Naive thymus-derived CD4-positive, alpha-beta T cell (primary cell): ENCODE measurements at regions of chr11 and their contacts with region 1.

Region 1: DNA sequence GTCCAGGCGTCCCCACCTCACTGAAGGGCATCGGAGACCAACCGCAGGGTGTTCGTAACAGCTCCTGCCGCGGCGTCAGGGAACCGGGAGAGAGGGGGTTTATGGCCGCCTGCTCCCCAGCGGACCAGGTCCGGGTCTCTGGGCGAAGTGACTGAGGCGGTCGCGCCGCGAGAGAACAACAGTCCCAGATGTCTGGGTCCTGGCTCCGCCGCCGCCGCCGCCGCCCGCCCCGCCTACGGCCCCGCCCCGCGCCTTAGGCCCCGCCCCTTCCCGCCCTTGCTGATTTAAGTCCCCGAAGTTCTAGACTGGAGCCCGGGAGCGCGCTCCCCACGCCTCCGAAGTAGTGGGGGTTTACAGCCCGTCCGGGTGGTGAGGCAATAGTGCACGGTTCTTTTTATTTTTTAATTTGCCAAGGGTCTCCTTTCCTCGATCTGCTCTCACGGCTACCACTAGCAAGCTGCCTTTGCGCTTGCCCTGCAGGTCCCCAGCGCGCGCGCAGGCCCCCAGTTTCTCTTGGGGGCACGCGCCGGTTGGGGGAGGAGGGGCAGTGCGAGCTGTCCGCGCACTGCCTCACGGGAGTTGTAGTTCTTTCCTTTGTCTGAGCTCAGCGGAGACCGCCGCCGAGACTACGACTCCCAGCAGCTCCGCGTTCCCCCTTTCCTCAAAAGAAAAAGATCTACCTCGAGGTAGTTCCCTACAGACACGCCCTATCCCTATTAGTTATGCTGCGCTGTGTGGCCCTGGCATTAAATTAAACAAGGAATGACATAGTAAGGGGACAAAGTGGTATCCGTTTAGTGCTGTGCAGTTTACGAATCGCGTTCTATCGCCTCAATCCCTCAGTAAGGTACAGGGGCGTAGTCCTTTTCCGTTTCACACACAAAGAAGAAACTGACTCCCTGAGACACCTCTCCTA is at the start of gene PGM2L1:
- DNase-seq: peak; percentile 86 to 97 (median 95)
- ATAC-seq: peak; percentile 94
- H3K4me3 ChIP-seq: peak within 1 kb of the TSS; percentile 64
- H3K4me3 Mint-ChIP-seq: peak within 1 kb of the TSS; percentile 95 to 100 (median 99)
- H3K27ac ChIP-seq: peak within 1 kb of the TSS; percentile 75
- H3K27ac Mint-ChIP-seq: peak within 1 kb of the TSS; percentile 93 to 99 (median 98)
- H3K4me1 ChIP-seq: peaks cover 0 to 10% of the 10 kb centered on the region in 2 donors
- H3K4me1 Mint-ChIP-seq: peaks cover 18 to 39% (median 28%) of the 10 kb centered on the region in 7 donors
- H3K27me3 ChIP-seq: no peaks in the 10 kb centered on the region
- H3K27me3 Mint-ChIP-seq: no peaks in the 10 kb centered on the region
- total RNA-seq, gene PGM2L1: 6.5 to 17.7 (median 9.9) TPM

Region 2: GRCh38 chr11:73779084-73779902 is 619.2 kb before region 1 on chr11:
- CTCF ChIA-PET with region 1: no interaction called
- POLR2A ChIA-PET with region 1: no interaction called
- intact Hi-C with region 1: loop called (anchors 1 kb)
- DNase-seq: peak; percentile 88 to 98 (median 97)
- ATAC-seq: peak; percentile 99
- H3K4me3 ChIP-seq: peak overlapping the region; percentile 58
- H3K4me3 Mint-ChIP-seq: peak overlapping the region; percentile 86 to 97 (median 94)
- H3K27ac ChIP-seq: peak overlapping the region; percentile 89
- H3K27ac Mint-ChIP-seq: peak overlapping the region; percentile 94 to 100 (median 100)
- H3K4me1 ChIP-seq: peaks cover 0 to 6% of the 10 kb centered on the region in 2 donors
- H3K4me1 Mint-ChIP-seq: peaks cover 2 to 18% (median 9%) of the 10 kb centered on the region in 7 donors
- H3K27me3 ChIP-seq: no peaks in the 10 kb centered on the region
- H3K27me3 Mint-ChIP-seq: peaks cover 0 to 6% (median 0%) of the 10 kb centered on the region in 5 donors

Region 3: DNA sequence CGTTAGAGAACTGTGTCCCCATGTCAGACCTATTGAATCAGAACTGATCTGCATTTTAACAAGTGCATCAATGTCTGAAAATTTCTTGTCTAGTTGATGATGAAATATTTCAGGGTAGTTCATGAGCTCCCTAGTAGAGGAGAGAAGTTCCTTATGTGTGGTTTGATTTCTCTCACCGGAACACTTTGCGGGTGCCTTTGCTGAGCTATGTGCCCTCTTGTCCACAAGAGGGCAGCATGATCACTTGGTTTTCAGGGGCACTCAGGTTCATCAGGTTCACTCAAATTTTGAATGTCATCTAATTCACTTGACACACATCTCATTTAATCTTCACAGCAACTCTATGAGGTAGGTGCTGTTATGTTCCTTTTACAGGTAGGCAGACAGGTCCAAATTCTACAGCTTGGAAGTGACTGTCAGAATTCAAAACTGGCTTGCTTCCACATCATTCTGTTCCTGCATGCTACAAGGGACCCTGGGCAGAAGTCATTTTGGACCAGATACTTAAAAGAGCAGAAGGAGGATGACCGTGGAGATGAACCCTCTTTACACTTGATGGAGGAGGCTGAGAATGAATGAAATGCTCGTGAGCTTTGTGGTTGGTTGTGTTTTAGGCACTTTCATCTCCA is 142.6 kb before region 1 on chr11:
- CTCF ChIA-PET with region 1: interaction called, 3 read pairs
- POLR2A ChIA-PET with region 1: no interaction called
- intact Hi-C with region 1: loop called in 1 of 2 experiments (anchors 5 kb)
- DNase-seq: peak in 8 of 9 donors; percentile 21 to 72 (median 62)
- ATAC-seq: peak; percentile 90
- H3K4me3 ChIP-seq: no peak overlapping the region
- H3K4me3 Mint-ChIP-seq: no peak overlapping the region
- H3K27ac ChIP-seq: no peak overlapping the region
- H3K27ac Mint-ChIP-seq: peak overlapping the region in 5 of 9 donors; percentile 4 to 68 (median 12)
- H3K4me1 ChIP-seq: peaks cover 0 to 6% of the 10 kb centered on the region in 2 donors
- H3K4me1 Mint-ChIP-seq: peaks cover 0 to 12% (median 5%) of the 10 kb centered on the region in 7 donors
- H3K27me3 ChIP-seq: no peaks in the 10 kb centered on the region
- H3K27me3 Mint-ChIP-seq: no peaks in the 10 kb centered on the region

Region 4: GRCh38 chr11:74611369-74611861 is 212.9 kb after region 1 on chr11:
- CTCF ChIA-PET with region 1: no interaction called
- POLR2A ChIA-PET with region 1: no interaction called
- intact Hi-C with region 1: no loop called
- DNase-seq: no peak
- ATAC-seq: no peak
- H3K4me3 ChIP-seq: no peak overlapping the region
- H3K4me3 Mint-ChIP-seq: no peak overlapping the region
- H3K27ac ChIP-seq: no peak overlapping the region
- H3K27ac Mint-ChIP-seq: no peak overlapping the region
- H3K4me1 ChIP-seq: no peaks in the 10 kb centered on the region
- H3K4me1 Mint-ChIP-seq: peaks cover 0 to 7% (median 0%) of the 10 kb centered on the region in 7 donors
- H3K27me3 ChIP-seq: no peaks in the 10 kb centered on the region
- H3K27me3 Mint-ChIP-seq: no peaks in the 10 kb centered on the region

Region 5: DNA sequence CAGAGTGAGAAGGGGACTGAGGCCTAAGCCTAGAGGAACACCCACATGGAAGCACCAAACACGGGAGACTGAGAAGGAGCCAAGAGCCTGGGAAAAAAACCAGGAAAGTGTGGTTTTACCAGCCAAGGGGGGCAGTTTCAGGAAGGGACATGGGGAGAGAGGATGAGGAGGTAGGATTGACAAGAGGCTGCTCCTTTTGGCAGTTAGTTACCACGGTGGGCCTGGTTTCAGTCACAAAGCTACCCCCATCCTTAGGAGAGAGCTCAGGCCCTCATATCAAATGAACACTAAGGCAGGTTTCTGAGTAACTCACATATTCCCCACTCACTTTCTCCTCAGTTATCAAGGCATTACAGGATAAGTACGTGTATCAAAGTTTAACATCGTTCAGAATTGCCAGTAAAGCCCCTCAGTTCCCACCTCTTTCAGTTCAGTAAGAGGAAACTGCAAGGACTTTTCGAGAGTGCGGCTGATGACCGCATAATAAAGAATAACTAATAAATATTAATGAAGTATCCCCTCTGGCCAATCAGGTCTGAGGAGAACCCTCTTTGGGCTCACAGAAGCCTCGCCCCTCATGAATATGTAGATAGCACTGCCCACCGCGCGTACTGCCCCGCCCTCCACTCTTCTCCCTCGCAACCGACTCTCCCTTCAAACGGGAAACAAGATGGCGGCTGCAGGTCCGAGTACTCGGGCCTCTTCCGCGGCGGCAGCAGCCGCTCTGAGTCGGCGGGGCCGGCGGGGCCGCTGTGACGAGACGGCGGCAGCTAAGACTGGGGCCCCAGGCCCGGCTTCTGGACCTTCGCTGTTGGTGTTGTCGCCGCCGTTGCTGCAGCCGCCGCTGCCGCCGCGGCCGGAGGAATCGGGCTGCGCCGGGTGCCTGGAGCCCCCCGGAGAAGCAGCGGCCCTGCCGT is 350.0 kb after region 1 on chr11 and contains the start of gene RNF169:
- CTCF ChIA-PET with region 1: no interaction called
- POLR2A ChIA-PET with region 1: no interaction called
- intact Hi-C with region 1: loop called (anchors 1 to 2 kb)
- DNase-seq: peak; percentile 59 to 88 (median 84)
- ATAC-seq: peak; percentile 100
- H3K4me3 ChIP-seq: peak within 1 kb of the TSS; percentile 73
- H3K4me3 Mint-ChIP-seq: peak within 1 kb of the TSS; percentile 81 to 99 (median 94)
- H3K27ac ChIP-seq: peak within 1 kb of the TSS; percentile 79
- H3K27ac Mint-ChIP-seq: peak within 1 kb of the TSS; percentile 84 to 97 (median 91)
- H3K4me1 ChIP-seq: peaks cover 16 to 29% of the 10 kb centered on the region in 2 donors
- H3K4me1 Mint-ChIP-seq: peaks cover 25 to 48% (median 42%) of the 10 kb centered on the region in 7 donors
- H3K27me3 ChIP-seq: no peaks in the 10 kb centered on the region
- H3K27me3 Mint-ChIP-seq: no peaks in the 10 kb centered on the region
- total RNA-seq, gene RNF169: 17.9 to 25.5 (median 22.2) TPM

Region 6: GRCh38 chr11:75562048-75562835 is 1163.7 kb after region 1 on chr11 and contains the start of gene SERPINH1:
- CTCF ChIA-PET with region 1: no interaction called
- POLR2A ChIA-PET with region 1: no interaction called
- intact Hi-C with region 1: loop called in 1 of 2 experiments (anchors 10 kb)
- DNase-seq: peak; percentile 29 to 73 (median 45)
- ATAC-seq: peak; percentile 80
- H3K4me3 ChIP-seq: peak within 1 kb of the TSS; percentile 91
- H3K4me3 Mint-ChIP-seq: peak within 1 kb of the TSS; percentile 94 to 99 (median 99)
- H3K27ac ChIP-seq: peak within 1 kb of the TSS; percentile 86
- H3K27ac Mint-ChIP-seq: peak within 1 kb of the TSS; percentile 87 to 97 (median 95)
- H3K4me1 ChIP-seq: peaks cover 15 to 22% of the 10 kb centered on the region in 2 donors
- H3K4me1 Mint-ChIP-seq: peaks cover 18 to 46% (median 32%) of the 10 kb centered on the region in 7 donors
- H3K27me3 ChIP-seq: no peaks in the 10 kb centered on the region
- H3K27me3 Mint-ChIP-seq: peaks cover 0 to under 1% (median 0%) of the 10 kb centered on the region in 5 donors
- total RNA-seq, gene SERPINH1: 5.1 to 19.9 (median 13.2) TPM